ENCODE measurements at regions of chr5 and their contacts with region 1.

Region 1: DNA sequence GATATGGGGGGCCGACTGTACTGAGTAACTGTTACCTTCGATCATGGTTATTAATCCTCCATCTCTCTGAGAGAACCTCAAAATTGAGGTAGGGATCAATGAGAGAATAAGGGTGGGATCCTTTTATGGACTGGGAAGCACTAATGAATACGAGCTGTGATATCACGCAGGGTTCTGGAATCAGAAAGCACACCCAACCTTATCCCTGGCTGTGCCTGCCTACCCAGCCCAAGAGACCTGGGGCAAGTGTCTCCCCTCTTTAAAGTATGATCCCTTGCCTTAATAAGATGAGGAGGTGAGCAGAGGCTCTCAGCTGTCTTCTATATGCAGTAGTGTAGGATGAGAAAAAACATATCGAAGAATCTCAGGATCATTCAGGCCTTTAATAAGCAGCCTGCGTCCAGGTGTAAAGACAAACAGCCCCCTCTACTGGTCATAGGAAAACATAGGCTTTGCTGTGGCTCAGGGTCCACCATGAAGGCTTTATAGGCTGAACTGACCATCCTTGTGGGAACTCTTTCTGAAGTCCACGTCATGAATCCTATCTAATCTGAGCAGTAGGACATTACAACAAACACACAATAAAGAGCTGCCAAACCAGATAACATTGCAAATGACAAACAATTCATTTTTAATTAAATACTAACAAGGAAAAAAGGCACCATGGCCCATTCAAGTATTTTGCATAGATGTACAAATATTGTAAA is 16.8 kb downstream of the NIPAL4 start:
- DNase-seq: peak in 3 of 14 experiments; percentile 50 to 65 (median 62)
- ATAC-seq: no peak
- H3K4me3 ChIP-seq: no peak overlapping the region
- H3K4me3 Mint-ChIP-seq: no peak overlapping the region
- H3K27ac ChIP-seq: no peak overlapping the region
- H3K27ac Mint-ChIP-seq: no peak overlapping the region
- H3K4me1 ChIP-seq: peaks cover 30% of the 10 kb centered on the region
- H3K4me1 Mint-ChIP-seq: no peaks in the 10 kb centered on the region
- H3K27me3 ChIP-seq: no peaks in the 10 kb centered on the region
- H3K27me3 Mint-ChIP-seq: no peaks in the 10 kb centered on the region
- CTCF ChIP-seq: peak; percentile 67

Region 2: GRCh38 chr5:157431544-157432200 is 45.2 kb before region 1 on chr5:
- CTCF ChIA-PET with region 1: no interaction called
- POLR2A ChIA-PET with region 1: no interaction called
- intact Hi-C with region 1: loop called in 1 of 2 experiments (anchors 5 kb)
- DNase-seq: peak in 6 of 14 experiments; percentile 2 to 77 (median 54)
- ATAC-seq: peak; percentile 82
- H3K4me3 ChIP-seq: no peak overlapping the region
- H3K4me3 Mint-ChIP-seq: no peak overlapping the region
- H3K27ac ChIP-seq: no peak overlapping the region
- H3K27ac Mint-ChIP-seq: no peak overlapping the region
- H3K4me1 ChIP-seq: no peaks in the 10 kb centered on the region
- H3K4me1 Mint-ChIP-seq: peaks cover 5% of the 10 kb centered on the region
- H3K27me3 ChIP-seq: no peaks in the 10 kb centered on the region
- H3K27me3 Mint-ChIP-seq: no peaks in the 10 kb centered on the region
- CTCF ChIP-seq: peak; percentile 56

Measured in CD4-positive, alpha-beta T cell (primary cell).